Adrenal gland (tissue), 19 donors: ENCODE measurements at regions of chr14 and their contacts with region 1.

Region 1: GRCh38 chr14:103292426-103293374 is 41.3 kb upstream of the EIF5 start:
- DNase-seq: peak; percentile 63 to 91 (median 77)
- H3K4me3 ChIP-seq: no peak overlapping the region
- H3K27ac ChIP-seq: no peak overlapping the region
- H3K4me1 ChIP-seq: no peaks in the 10 kb centered on the region
- H3K27me3 ChIP-seq: no peaks in the 10 kb centered on the region
- CTCF ChIP-seq: peak; percentile 79 to 93 (median 90)
- POLR2A ChIP-seq: no peak

Region 2: DNA sequence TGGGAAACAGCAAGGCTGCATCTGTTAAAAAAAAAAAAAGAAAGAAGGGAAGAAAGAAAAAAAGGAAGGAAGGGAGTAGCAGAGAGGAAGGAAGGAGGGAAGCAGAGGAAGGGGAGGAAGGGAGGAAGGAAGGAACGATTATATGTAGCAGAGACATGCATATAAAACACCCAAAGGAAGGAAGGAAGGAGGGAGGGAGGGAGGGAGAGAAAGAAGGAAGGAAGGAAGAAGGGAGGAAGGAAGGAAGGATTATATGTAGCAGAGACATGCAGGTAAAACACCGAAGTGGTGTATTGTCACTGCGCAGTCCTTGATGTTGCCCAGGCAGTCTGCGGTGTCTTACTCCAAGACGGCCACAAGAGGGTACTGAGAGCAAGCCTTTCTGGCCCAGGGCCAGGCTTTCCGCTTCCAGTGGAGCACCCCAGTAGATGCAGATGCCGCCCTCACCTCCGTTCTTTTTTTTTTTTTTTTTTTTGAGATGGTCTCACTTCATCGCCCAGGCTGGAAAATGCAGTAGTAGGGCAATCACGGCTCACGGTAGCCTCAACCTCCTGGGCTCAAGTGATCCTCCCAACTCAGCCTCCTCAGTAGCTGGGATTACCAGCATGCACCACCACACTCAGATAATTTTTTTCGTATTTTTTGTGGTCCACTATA is 214.5 kb before region 1 on chr14:
- intact Hi-C with region 1: loop called in 1 of 2 experiments (anchors 5 kb)
- DNase-seq: peak; percentile 77 to 92 (median 87)
- H3K4me3 ChIP-seq: no peak overlapping the region
- H3K27ac ChIP-seq: no peak overlapping the region
- H3K4me1 ChIP-seq: peaks cover 5 to 8% of the 10 kb centered on the region in 2 donors
- H3K27me3 ChIP-seq: no peaks in the 10 kb centered on the region
- CTCF ChIP-seq: peak; percentile 71 to 88 (median 80)
- POLR2A ChIP-seq: no peak

Region 3: DNA sequence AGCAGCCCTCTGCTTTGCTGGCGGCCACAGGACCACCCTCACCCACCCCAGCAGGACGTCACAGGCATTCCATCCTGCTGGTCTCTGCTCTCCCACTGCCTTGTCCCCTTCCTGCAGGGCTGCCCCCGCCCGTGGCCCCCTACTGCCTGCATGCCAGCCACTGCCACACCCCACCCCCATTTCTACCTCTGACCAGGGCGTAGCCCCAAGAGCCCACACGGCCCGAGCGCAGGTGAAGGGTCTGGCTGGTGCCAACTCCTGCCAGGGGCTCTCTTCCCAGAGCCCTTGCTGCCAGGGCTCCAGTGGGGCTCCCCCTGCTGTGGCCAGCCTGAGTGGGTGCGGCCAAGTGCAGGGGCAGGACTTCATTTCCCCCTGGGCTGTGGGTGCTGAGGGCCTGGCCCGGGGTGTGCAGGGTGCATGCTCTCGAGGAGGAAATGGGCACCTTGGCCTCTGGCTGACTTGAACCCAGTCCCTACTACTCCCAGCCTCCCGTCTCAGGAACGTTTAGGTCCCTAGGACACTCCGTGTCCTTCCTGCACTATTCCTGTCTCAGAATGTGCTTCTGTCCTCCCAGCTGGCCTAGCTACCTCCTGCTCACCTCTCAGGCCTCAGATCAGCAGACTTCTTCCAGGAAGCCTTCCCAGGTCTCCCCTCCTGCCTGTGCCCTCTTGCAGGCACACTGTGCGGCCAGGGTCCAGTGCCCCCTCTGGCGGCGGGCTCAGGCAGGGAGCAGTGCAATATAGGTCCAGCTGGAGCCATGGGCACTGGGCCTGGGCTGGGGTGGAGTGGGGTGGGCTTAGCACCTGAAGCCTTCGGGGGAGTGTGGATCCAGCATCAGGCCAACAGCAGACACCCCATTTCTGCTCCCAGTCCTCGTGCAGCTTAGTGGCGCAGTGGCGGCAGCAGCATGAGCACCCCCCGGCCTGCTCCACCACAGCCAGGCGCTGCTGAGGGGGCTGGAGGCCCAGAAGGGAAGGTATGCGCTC is 207.3 kb before region 1 on chr14:
- intact Hi-C with region 1: loop called in 1 of 2 experiments (anchors 5 kb)
- DNase-seq: no peak
- H3K4me3 ChIP-seq: no peak overlapping the region
- H3K27ac ChIP-seq: no peak overlapping the region
- H3K4me1 ChIP-seq: no peaks in the 10 kb centered on the region
- H3K27me3 ChIP-seq: peaks cover 19% of the 10 kb centered on the region
- CTCF ChIP-seq: no peak
- POLR2A ChIP-seq: no peak

Region 4: DNA sequence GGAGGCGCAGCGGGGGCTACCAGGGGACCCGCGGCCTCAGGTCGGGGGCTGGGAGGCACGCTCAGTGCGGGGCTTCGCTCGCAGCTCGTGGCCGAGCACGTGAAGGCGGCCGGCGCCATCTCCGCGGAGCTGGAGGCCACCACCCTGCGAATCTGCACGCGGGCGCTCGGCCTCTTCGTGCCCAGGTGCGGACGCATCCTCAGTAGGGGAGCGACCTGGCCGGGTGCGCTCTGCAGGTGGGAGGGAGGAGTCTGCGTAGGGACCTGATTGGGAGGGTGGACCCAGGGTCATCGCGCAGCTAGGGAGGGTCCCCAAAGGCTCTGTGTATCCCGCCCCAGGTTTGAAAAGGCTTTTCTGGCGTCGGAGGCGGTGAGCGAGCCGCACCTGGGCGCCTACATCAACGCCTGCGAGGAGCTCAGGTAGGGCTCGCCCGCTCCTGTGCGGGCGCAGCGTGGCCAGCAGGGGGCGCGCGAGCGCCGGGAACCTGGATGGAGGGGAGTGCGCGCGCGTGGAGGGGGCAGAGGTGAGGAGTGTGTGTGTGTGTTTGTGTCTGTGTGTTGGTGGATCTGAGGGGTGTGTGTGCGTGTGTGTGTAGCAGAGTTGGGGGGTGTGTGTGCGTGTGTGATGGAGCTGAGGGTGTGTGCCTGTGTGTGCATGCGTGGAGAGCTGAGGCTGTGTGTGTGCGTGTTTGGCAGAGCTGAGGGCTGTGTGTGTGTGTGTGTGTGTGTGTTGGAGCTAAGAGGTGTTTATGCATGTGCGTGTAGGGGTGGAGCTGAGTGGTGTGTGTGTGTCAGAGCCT is 187.8 kb before region 1 on chr14:
- intact Hi-C with region 1: loop called in 1 of 2 experiments (anchors 2 kb)
- DNase-seq: peak in 6 of 7 donors; percentile 57 to 73 (median 68)
- H3K4me3 ChIP-seq: no peak overlapping the region
- H3K27ac ChIP-seq: no peak overlapping the region
- H3K4me1 ChIP-seq: peaks cover 11 to 19% of the 10 kb centered on the region in 2 donors
- H3K27me3 ChIP-seq: peaks cover 17% of the 10 kb centered on the region
- CTCF ChIP-seq: peak; percentile 90 to 98 (median 96)
- POLR2A ChIP-seq: no peak

Region 5: GRCh38 chr14:103185051-103185992 is 107.4 kb before region 1 on chr14:
- intact Hi-C with region 1: loop called in 1 of 2 experiments (anchors 5 kb)
- DNase-seq: no peak
- H3K4me3 ChIP-seq: no peak overlapping the region
- H3K27ac ChIP-seq: no peak overlapping the region
- H3K4me1 ChIP-seq: peaks cover 8 to 9% of the 10 kb centered on the region in 2 donors
- H3K27me3 ChIP-seq: no peaks in the 10 kb centered on the region
- CTCF ChIP-seq: peak; percentile 56 to 85 (median 74)
- POLR2A ChIP-seq: no peak